ENCODE measurements at regions of chr21 and their contacts with region 1.

Region 1: GRCh38 chr21:25862596-25862995 is 127.8 kb downstream of the GABPA start:
- DNase-seq: no peak
- H3K4me3 ChIP-seq: no peak overlapping the region
- H3K27ac ChIP-seq: no peak overlapping the region
- H3K4me1 ChIP-seq: peaks cover 0 to 6% (median 0%) of the 10 kb centered on the region in 4 donors
- H3K27me3 ChIP-seq: no peaks in the 10 kb centered on the region
- CTCF ChIP-seq: peak; percentile 50 to 69 (median 58)
- EP300 ChIP-seq: no peak
- POLR2A ChIP-seq: no peak

Region 2: GRCh38 chr21:24428591-24429199 is 1433.9 kb before region 1 on chr21:
- intact Hi-C with region 1: no loop called
- DNase-seq: no peak
- H3K4me3 ChIP-seq: peak overlapping the region; percentile 10 to 45 (median 26)
- H3K27ac ChIP-seq: no peak overlapping the region
- H3K4me1 ChIP-seq: no peaks in the 10 kb centered on the region
- H3K27me3 ChIP-seq: no peaks in the 10 kb centered on the region
- CTCF ChIP-seq: no peak
- EP300 ChIP-seq: no peak
- POLR2A ChIP-seq: no peak

Region 3: DNA sequence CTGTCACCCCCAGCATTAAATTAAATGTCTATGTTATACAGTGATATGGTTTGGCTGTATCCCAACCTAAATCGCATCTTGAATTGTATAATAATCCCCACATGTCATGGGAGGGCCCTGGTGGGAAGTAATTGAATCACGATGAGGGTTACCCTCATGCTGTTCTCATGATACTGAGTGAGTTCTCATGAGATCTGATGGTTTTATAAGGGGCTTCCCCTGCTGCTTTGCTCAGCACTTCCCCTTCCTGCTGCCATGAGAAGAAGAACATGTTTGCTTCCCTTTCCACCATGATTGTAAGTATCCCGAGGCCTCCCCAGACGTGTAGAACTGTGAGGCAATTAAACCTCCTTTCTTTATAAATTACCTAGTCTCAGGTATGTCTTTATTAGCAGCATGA is 701.0 kb before region 1 on chr21:
- intact Hi-C with region 1: no loop called
- DNase-seq: no peak
- H3K4me3 ChIP-seq: no peak overlapping the region
- H3K27ac ChIP-seq: no peak overlapping the region
- H3K4me1 ChIP-seq: no peaks in the 10 kb centered on the region
- H3K27me3 ChIP-seq: no peaks in the 10 kb centered on the region
- CTCF ChIP-seq: no peak
- EP300 ChIP-seq: no peak
- POLR2A ChIP-seq: no peak

Region 4: GRCh38 chr21:25790122-25790877 is 72.3 kb before region 1 on chr21:
- intact Hi-C with region 1: loop called (anchors 5 kb)
- DNase-seq: no peak
- H3K4me3 ChIP-seq: peak overlapping the region; percentile 40 to 50 (median 48)
- H3K27ac ChIP-seq: peak overlapping the region in 3 of 4 donors; percentile 7 to 50 (median 27)
- H3K4me1 ChIP-seq: peaks cover 0 to 17% (median 10%) of the 10 kb centered on the region in 4 donors
- H3K27me3 ChIP-seq: peaks cover 0 to 12% (median 0%) of the 10 kb centered on the region in 4 donors
- CTCF ChIP-seq: peak; percentile 39 to 50 (median 49)
- EP300 ChIP-seq: no peak
- POLR2A ChIP-seq: no peak

Measured in esophagus muscularis mucosa (tissue), 4 donors.